ENCODE measurements at regions of chr11 and their contacts with region 1.

Region 1: GRCh38 chr11:62880803-62881578 is at the start of gene SLC3A2:
- DNase-seq: peak; percentile 76 to 94 (median 85)
- ATAC-seq: peak; percentile 74
- H3K4me3 ChIP-seq: peak within 1 kb of the TSS; percentile 66 to 97
- H3K4me3 Mint-ChIP-seq: peak within 1 kb of the TSS; percentile 100
- H3K27ac ChIP-seq: peak within 1 kb of the TSS; percentile 94 to 99
- H3K27ac Mint-ChIP-seq: peak within 1 kb of the TSS; percentile 100
- H3K4me1 ChIP-seq: peaks cover 36% of the 10 kb centered on the region
- H3K4me1 Mint-ChIP-seq: peaks cover 50% of the 10 kb centered on the region
- H3K27me3 ChIP-seq: no peaks in the 10 kb centered on the region
- H3K27me3 Mint-ChIP-seq: no peaks in the 10 kb centered on the region
- CTCF ChIP-seq: peak; percentile 84
- total RNA-seq, gene SLC3A2: 212 to 245 TPM

Region 2: DNA sequence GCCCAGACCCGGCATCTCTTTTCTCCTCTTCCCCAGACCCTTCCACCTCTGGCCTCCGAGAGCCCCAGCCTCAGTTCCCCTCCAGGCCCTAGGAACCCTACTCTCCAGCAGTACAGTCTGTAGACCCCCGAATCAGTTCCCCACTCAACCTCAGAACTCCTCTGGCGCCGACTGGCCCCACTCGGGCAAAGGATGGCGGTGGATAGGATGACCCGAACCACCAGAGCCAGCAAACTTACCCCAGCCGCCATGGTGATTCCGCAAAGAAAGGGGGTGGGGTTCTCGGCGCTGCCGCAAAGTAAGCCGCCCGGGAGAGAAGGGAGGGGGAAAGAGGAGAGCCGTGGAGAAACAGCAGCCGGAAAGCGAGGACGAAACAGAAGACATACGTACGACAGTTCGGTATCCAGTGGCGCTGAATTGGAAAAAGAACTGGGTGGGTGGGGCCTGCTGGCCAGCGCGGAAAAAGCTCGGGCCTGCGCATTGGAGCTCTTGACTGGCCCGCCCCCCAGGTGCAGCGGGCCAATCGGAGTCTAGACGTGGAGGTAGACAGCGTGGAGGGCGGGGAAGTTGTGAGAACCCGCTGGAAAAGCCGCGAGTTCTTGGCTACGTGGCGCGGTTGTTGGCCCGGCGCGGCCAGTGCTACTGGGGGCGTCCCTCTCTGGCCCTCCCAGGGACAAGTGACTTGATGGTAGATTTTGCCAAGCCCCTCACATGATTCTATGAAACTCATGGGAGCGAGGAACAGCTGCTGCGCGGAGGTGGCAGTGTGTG is 307.2 kb before region 1 on chr11 and contains the start of gene EEF1G:
- CTCF ChIA-PET with region 1: no interaction called
- POLR2A ChIA-PET with region 1: no interaction called
- intact Hi-C with region 1: loop called (anchors 1 to 2 kb)
- DNase-seq: peak; percentile 95 to 100 (median 97)
- ATAC-seq: peak; percentile 94
- H3K4me3 ChIP-seq: peak within 1 kb of the TSS; percentile 97 to 99
- H3K4me3 Mint-ChIP-seq: peak within 1 kb of the TSS; percentile 97
- H3K27ac ChIP-seq: peak within 1 kb of the TSS; percentile 85
- H3K27ac Mint-ChIP-seq: peak within 1 kb of the TSS; percentile 90
- H3K4me1 ChIP-seq: peaks cover 28% of the 10 kb centered on the region
- H3K4me1 Mint-ChIP-seq: peaks cover 55% of the 10 kb centered on the region
- H3K27me3 ChIP-seq: no peaks in the 10 kb centered on the region
- H3K27me3 Mint-ChIP-seq: no peaks in the 10 kb centered on the region
- CTCF ChIP-seq: no peak
- total RNA-seq, gene EEF1G: 2,174 to 2,204 TPM

Region 3: GRCh38 chr11:62716816-62717215 is 164.2 kb before region 1 on chr11:
- CTCF ChIA-PET with region 1: no interaction called
- POLR2A ChIA-PET with region 1: no interaction called
- intact Hi-C with region 1: no loop called
- DNase-seq: no peak
- ATAC-seq: no peak
- H3K4me3 ChIP-seq: no peak overlapping the region
- H3K4me3 Mint-ChIP-seq: no peak overlapping the region
- H3K27ac ChIP-seq: no peak overlapping the region
- H3K27ac Mint-ChIP-seq: no peak overlapping the region
- H3K4me1 ChIP-seq: no peaks in the 10 kb centered on the region
- H3K4me1 Mint-ChIP-seq: peaks cover 51% of the 10 kb centered on the region
- H3K27me3 ChIP-seq: no peaks in the 10 kb centered on the region
- H3K27me3 Mint-ChIP-seq: no peaks in the 10 kb centered on the region
- CTCF ChIP-seq: no peak

Region 4: DNA sequence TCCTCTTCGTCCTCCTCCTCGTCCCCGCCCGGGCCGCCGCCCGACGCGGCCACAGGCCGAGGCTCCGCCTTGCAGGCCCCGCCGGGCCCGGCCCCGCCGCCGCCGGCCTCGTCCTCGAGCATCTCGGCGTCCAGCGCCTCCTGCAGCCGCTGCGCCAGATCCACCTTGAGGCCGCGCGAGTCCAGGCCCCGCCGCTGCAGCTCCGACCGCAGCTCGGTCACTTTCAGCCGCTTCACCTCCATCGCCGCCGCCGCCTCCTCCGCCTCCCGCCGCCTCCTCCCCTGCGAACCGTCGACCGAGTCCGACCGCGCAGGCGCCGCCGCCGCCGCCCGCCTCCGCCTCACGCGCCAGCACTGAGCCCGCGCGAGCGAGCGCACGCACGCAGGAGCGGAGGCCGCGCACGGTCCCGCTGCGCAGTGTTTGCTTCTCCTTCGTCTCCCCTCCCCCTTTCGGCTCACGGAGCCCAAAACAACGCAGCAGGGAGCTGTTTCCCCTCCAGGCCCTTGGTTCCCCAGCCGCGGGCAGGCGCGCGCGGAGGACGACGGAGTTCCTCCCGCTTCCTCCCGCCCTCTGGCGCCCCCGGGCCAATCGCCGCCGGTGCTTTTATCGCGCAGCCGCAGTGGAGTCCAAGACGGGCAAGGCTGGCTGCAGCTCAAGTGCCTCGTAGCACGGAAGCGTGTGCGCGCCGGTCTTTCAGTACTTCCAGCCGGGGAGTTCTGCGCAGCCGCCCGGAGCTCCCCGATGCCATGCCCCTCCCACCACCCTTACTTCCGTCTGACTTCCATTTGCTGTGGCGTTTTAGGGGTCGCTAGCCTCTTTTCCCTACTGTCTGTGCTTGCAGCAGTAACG is 153.9 kb before region 1 on chr11 and contains the start of gene HNRNPUL2:
- CTCF ChIA-PET with region 1: no interaction called
- POLR2A ChIA-PET with region 1: interaction called, 24 read pairs
- intact Hi-C with region 1: loop called (anchors 1 kb)
- DNase-seq: peak; percentile 96 to 100 (median 99)
- ATAC-seq: peak; percentile 85
- H3K4me3 ChIP-seq: peak within 1 kb of the TSS; percentile 77 to 81
- H3K4me3 Mint-ChIP-seq: peak within 1 kb of the TSS; percentile 96
- H3K27ac ChIP-seq: peak within 1 kb of the TSS; percentile 82 to 91
- H3K27ac Mint-ChIP-seq: peak within 1 kb of the TSS; percentile 98
- H3K4me1 ChIP-seq: peaks cover 46% of the 10 kb centered on the region
- H3K4me1 Mint-ChIP-seq: peaks cover 57% of the 10 kb centered on the region
- H3K27me3 ChIP-seq: no peaks in the 10 kb centered on the region
- H3K27me3 Mint-ChIP-seq: no peaks in the 10 kb centered on the region
- CTCF ChIP-seq: no peak
- total RNA-seq, gene HNRNPUL2: 29.6 to 31.5 TPM

Region 5: GRCh38 chr11:62787005-62787759 is 93.8 kb before region 1 on chr11 and contains the start of gene TMEM179B:
- CTCF ChIA-PET with region 1: interaction called, 7 read pairs
- POLR2A ChIA-PET with region 1: interaction called, 24 read pairs
- intact Hi-C with region 1: loop called (anchors 1 kb)
- DNase-seq: peak; percentile 94 to 100 (median 99)
- ATAC-seq: peak; percentile 68
- H3K4me3 ChIP-seq: peak within 1 kb of the TSS; percentile 94 to 96
- H3K4me3 Mint-ChIP-seq: peak within 1 kb of the TSS; percentile 94
- H3K27ac ChIP-seq: peak within 1 kb of the TSS; percentile 89 to 91
- H3K27ac Mint-ChIP-seq: peak within 1 kb of the TSS; percentile 95
- H3K4me1 ChIP-seq: peaks cover 42% of the 10 kb centered on the region
- H3K4me1 Mint-ChIP-seq: peaks cover 41% of the 10 kb centered on the region
- H3K27me3 ChIP-seq: no peaks in the 10 kb centered on the region
- H3K27me3 Mint-ChIP-seq: no peaks in the 10 kb centered on the region
- CTCF ChIP-seq: peak; percentile 34
- total RNA-seq, gene TMEM179B: 27.5 to 28.4 TPM

Region 6: DNA sequence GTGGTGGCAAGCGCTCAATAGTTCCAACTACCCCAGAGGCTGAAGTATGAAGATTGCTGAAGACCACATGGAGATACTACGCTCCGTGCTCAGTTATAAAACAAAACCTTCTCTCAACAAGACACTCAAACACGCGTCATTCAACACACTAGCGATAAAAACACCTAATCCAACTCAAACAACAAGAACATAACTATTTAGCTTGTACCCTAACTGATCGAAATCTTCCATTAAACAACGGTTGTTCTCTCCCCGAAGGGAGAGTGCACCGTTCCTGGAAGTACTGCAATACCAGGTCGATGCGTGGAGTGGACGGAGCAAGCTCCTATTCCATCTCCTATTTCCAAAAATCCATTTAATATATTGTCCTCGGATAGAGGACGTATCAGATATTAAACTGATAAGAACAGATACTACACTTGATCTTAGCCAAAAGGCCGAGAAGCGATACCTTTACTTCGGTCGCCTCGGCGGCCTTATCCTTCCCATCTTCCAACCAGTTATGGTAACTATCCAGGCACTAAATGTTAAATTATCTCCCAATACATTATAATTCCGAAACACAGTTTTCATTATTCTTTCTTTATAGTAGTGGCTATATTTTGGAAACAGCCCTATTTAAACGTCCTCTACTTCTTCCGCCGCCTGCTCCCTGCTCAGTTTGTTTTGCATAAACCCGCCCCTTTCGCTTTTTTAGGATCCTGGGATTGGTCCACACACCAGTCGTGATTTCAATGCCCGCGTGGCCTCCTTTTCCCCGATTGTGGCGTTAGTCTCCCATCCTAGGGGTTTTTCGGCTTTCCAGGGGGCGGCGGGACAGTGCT is 39.4 kb before region 1 on chr11:
- CTCF ChIA-PET with region 1: no interaction called
- POLR2A ChIA-PET with region 1: interaction called, 57 read pairs
- intact Hi-C with region 1: loop called in 1 of 2 experiments (anchors 1 kb)
- DNase-seq: peak; percentile 69 to 95 (median 80)
- ATAC-seq: peak; percentile 49
- H3K4me3 ChIP-seq: peak overlapping the region; percentile 61 to 79
- H3K4me3 Mint-ChIP-seq: no peak overlapping the region
- H3K27ac ChIP-seq: peak overlapping the region; percentile 97 to 99
- H3K27ac Mint-ChIP-seq: no peak overlapping the region
- H3K4me1 ChIP-seq: peaks cover 32% of the 10 kb centered on the region
- H3K4me1 Mint-ChIP-seq: peaks cover 25% of the 10 kb centered on the region
- H3K27me3 ChIP-seq: no peaks in the 10 kb centered on the region
- H3K27me3 Mint-ChIP-seq: no peaks in the 10 kb centered on the region
- CTCF ChIP-seq: no peak

Region 7: DNA sequence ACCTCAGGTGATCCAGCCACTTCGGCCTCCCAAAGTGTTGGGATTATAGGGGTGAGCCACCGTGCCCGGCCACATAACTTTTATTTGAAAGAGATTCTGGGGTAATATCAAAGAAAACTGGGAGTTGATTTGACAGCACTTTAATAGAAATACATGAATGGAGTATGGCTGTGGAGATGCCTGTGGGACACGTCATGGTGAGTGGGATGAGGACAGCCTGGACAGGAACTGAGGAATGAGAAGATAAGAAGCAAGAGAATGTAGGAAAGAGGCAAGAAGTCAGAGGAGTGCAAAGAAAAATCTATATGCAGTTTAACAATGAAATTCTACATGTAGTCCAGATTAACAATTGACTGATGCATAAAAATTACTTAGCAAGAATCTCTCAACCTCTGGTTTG is 72.8 kb after region 1 on chr11:
- CTCF ChIA-PET with region 1: no interaction called
- POLR2A ChIA-PET with region 1: no interaction called
- intact Hi-C with region 1: no loop called
- DNase-seq: no peak
- ATAC-seq: no peak
- H3K4me3 ChIP-seq: no peak overlapping the region
- H3K4me3 Mint-ChIP-seq: no peak overlapping the region
- H3K27ac ChIP-seq: no peak overlapping the region
- H3K27ac Mint-ChIP-seq: no peak overlapping the region
- H3K4me1 ChIP-seq: no peaks in the 10 kb centered on the region
- H3K4me1 Mint-ChIP-seq: no peaks in the 10 kb centered on the region
- H3K27me3 ChIP-seq: peaks cover 0 to 3% of the 10 kb centered on the region in 2 experiments
- H3K27me3 Mint-ChIP-seq: peaks cover 23% of the 10 kb centered on the region
- CTCF ChIP-seq: no peak

Region 8: DNA sequence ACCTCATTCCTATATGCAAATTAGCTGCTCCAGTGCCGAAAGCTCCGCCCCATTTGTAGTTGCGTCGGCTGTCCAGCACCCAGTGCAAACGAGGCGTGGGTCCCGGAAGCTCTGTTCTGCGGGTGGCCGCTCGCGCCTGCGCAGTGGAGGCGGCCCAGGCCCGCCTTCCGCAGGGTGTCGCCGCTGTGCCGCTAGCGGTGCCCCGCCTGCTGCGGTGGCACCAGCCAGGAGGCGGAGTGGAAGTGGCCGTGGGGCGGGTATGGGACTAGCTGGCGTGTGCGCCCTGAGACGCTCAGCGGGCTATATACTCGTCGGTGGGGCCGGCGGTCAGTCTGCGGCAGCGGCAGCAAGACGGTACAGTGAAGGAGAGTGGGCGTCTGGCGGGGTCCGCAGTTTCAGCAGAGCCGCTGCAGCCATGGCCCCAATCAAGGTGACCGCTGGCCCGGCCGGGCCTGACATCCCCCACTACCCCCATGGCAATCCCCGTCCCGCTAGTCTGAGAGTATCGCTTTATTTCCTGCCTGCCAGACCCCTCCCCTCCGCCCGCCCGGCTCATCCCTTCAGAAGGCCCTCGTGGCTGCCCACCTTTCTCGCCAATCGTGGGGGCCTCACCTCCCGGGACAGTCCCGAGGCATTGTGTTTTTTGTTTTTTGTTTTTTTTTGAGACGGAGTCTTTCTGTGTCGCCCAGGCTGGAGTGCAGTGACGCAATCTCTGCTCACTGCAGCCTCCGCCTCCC is 1437.1 kb after region 1 on chr11 and contains the start of gene PRDX5:
- CTCF ChIA-PET with region 1: no interaction called
- POLR2A ChIA-PET with region 1: no interaction called
- intact Hi-C with region 1: loop called in 1 of 2 experiments (anchors 5 kb)
- DNase-seq: peak; percentile 90 to 99 (median 93)
- ATAC-seq: peak; percentile 75
- H3K4me3 ChIP-seq: peak within 1 kb of the TSS; percentile 66 to 69
- H3K4me3 Mint-ChIP-seq: peak within 1 kb of the TSS; percentile 89
- H3K27ac ChIP-seq: peak within 1 kb of the TSS; percentile 97 to 100
- H3K27ac Mint-ChIP-seq: peak within 1 kb of the TSS; percentile 99
- H3K4me1 ChIP-seq: peaks cover 8% of the 10 kb centered on the region
- H3K4me1 Mint-ChIP-seq: peaks cover 32% of the 10 kb centered on the region
- H3K27me3 ChIP-seq: no peaks in the 10 kb centered on the region
- H3K27me3 Mint-ChIP-seq: no peaks in the 10 kb centered on the region
- CTCF ChIP-seq: no peak
- total RNA-seq, gene PRDX5: 39.9 to 41.0 TPM

Measured in CD8-positive, alpha-beta T cell (primary cell).